ENCODE measurements at regions of chr16 and their contacts with region 1.

Region 1: GRCh38 chr16:4616047-4616811 is 1.5 kb upstream of the UBALD1 start:
- DNase-seq: peak; percentile 98 to 100 (median 99)
- H3K4me3 ChIP-seq: peak overlapping the region; percentile 56 to 97 (median 81)
- H3K27ac ChIP-seq: peak overlapping the region; percentile 75 to 100 (median 98)
- H3K27me3 ChIP-seq: no peaks in the 10 kb centered on the region
- CTCF ChIP-seq: peak in 54 of 56 donors; percentile 15 to 77 (median 59)

Region 2: DNA sequence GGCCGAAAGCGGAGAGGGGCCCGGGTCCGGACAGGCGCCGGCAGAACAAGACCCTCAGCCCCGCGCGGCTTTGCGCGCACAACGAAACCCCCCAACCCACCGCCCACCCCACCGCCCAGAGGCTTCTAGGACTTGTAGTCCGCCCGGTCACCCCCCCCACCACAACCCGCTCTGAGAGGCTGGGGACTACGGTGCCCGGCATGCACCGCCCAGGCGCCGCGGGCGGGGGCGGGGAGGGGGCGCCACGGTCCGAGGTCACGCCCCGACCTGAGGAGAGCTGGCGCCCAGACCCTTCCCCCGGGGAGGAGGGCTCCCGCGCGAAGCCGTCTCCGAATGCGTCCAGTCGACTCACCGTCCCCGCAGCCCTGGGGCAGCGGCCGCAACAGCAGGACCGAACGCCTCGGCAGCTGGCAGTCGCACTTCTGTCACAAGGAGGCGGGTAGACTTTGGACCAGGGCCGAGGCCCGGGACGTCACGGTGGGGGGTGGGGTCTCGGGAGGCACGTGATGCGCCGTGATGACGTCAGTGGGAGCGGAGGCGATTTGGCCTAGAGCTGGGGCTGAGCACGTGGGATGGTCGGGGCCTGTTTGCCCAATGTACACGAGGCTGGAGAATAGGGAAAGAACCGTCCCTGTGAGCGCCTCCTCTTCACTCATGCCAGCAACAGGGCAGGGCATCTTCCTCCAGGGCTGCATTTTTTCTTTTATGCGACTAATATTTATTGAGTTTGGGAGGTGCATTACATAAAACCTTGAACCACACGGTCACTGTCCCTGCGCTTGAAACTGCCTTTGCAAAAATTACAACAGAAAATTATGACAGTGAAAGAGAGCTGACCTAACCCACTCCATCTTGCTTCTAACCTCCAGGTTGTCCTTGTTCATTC is 77.6 kb before region 1 on chr16 and contains the start of gene CDIP1:
- intact Hi-C with region 1: loop called in 1 of 2 experiments (anchors 5 kb)
- DNase-seq: peak; percentile 95 to 98 (median 97)
- H3K4me3 ChIP-seq: peak within 1 kb of the TSS; percentile 68 to 97 (median 90)
- H3K27ac ChIP-seq: peak within 1 kb of the TSS; percentile 85 to 99 (median 97)
- H3K27me3 ChIP-seq: no peaks in the 10 kb centered on the region
- CTCF ChIP-seq: peak in 35 of 56 donors; percentile 5 to 54 (median 22)
- total RNA-seq, gene CDIP1: 100 to 237 (median 186) TPM

Region 3: DNA sequence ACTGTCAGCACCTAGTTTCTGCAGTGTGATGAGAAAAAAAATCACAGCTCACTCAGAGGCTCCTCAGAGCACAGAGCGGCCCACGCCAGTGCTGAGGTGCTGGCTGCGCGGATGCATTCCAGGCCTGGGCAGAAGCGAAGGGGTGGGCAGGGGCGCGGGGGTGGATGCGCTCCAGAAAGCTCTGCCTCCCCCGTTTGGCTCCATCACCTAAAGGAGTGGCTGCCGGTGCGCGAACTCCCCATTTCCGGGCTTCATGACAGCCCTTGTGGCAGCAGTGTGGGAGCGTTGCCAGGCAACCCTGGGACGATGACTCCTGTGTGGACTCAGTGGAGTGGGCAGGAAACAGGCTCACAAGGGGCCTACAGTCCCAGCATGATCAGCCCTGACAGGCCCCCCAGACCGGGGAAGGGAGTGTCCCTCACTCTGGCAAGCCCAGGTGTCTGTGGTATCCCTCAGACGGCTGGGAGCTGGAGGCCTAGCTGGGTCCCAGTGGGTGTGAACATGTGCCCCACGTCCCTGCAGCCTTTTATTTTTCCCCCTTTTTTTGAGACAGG is 44.3 kb after region 1 on chr16:
- intact Hi-C with region 1: loop called in 1 of 2 experiments (anchors 5 kb)
- DNase-seq: peak in 9 of 10 donors; percentile 49 to 90 (median 78)
- H3K4me3 ChIP-seq: peak overlapping the region in 3 of 59 donors; percentile 1 to 17 (median 8)
- H3K27ac ChIP-seq: peak overlapping the region in 57 of 59 donors; percentile 20 to 96 (median 85)
- H3K27me3 ChIP-seq: no peaks in the 10 kb centered on the region
- CTCF ChIP-seq: no peak

Region 4: GRCh38 chr16:4723071-4723767 is 107.0 kb after region 1 on chr16:
- intact Hi-C with region 1: no loop called
- DNase-seq: no peak
- H3K4me3 ChIP-seq: no peak overlapping the region
- H3K27ac ChIP-seq: no peak overlapping the region
- H3K27me3 ChIP-seq: no peaks in the 10 kb centered on the region
- CTCF ChIP-seq: no peak